SK-N-SH (cell line): ENCODE measurements at regions of chr5 and their contacts with region 1.

Region 1: DNA sequence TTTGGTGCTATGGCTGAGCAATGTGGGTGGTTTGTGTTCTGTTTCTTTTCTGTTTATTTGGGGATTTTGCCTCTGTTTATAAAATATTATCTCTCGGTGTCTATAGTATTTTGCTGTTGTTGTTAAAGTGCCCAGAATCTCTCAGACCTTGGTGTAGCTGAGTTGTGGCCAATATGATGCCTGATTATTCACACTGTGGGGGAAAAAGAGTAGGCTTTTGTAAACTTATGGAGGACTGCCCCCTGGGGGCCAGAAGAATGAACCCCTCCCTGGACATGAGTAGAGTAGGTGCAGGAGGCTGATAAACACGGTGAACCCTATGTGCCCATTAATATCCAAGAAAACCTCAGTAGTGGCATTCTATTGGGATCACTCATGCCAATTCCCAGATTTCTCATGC is 49.0 kb upstream of the DPYSL3 start:
- DNase-seq: peak; percentile 66
- H3K4me3 ChIP-seq: no peak overlapping the region
- H3K27ac ChIP-seq: no peak overlapping the region
- H3K4me1 ChIP-seq: peaks cover 5 to 13% of the 10 kb centered on the region in 2 experiments; a peak in 2 of 4 replicates
- H3K27me3 ChIP-seq: no peaks in the 10 kb centered on the region
- CTCF ChIP-seq: peak; percentile 88
- EP300 ChIP-seq: no peak
- RAD21 ChIP-seq: peak; percentile 94

Region 2: DNA sequence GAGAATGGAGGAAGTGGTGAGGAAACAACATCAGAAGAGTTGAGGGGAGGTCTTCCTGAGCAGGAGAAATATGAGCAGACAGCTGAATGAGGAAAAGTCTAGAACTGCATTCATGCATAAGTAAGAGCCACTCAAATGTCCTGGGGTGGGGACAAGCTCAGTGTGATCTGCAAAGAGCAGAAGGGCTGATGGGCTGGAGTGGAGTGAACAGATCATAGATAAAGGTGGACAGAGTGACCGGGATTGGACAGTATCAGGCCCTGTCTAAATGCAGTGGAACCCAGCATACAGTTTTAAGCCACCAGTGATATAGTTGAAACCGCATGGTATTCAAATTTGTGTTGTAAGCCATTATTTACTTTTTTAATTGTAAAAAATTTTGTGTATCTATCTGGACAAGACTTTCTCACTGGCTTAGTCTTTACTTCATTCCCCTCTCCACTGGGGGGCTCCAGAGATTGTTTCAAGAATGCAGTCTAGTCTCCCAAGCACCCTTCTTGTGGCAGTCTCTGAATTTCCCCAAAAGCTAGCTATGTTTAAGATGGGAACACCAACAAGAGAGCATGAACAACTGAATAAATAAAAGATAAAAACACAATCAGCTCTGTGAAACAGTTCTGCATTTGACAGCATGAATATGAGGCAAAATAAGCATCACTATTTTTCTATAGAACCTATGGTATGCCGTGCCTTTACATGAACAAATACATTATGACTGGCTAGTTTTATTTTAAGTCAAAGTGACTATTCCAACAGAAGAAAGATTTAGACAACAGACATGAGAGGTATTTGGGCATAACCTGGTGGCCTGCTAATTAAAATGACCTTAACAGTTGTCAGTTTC is 334.7 kb before region 1 on chr5:
- CTCF ChIA-PET with region 1: interaction called, 18 read pairs
- POLR2A ChIA-PET with region 1: interaction called, 4 read pairs
- DNase-seq: peak; percentile 69
- H3K4me3 ChIP-seq: no peak overlapping the region
- H3K27ac ChIP-seq: no peak overlapping the region
- H3K4me1 ChIP-seq: no peaks in the 10 kb centered on the region; a peak in 2 of 4 replicates
- H3K27me3 ChIP-seq: no peaks in the 10 kb centered on the region
- CTCF ChIP-seq: peak; percentile 84
- EP300 ChIP-seq: no peak
- RAD21 ChIP-seq: peak; percentile 84

Region 3: DNA sequence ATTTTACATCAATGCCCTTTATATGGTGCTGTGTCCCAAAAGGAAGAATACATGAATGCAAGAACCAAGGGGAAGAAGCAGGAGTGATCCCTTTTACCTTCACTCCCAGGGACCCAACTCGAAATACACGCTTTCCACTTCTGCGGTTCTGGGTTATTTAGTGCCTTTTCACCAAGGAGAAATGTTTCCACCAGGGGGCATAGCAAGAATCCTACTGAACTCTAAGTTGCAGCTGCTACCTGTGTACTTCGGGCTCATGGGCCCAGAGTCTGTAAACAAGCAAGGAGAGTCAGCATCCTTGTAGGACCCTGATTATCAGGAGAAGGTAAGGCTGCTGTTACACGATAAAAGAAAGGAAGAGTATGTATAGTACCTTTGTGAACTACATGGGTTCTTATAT is 94.6 kb before region 1 on chr5:
- CTCF ChIA-PET with region 1: interaction called, 18 read pairs
- POLR2A ChIA-PET with region 1: no interaction called
- DNase-seq: no peak
- H3K4me3 ChIP-seq: no peak overlapping the region
- H3K27ac ChIP-seq: no peak overlapping the region
- H3K4me1 ChIP-seq: peaks cover 0 to 12% of the 10 kb centered on the region in 2 experiments; a peak in 3 of 4 replicates
- H3K27me3 ChIP-seq: no peaks in the 10 kb centered on the region
- CTCF ChIP-seq: peak; percentile 60
- EP300 ChIP-seq: no peak
- RAD21 ChIP-seq: peak; percentile 69

Region 4: GRCh38 chr5:147509710-147510651 is 48.8 kb before region 1 on chr5 and contains the start of gene DPYSL3:
- CTCF ChIA-PET with region 1: interaction called, 16 read pairs
- POLR2A ChIA-PET with region 1: no interaction called
- DNase-seq: peak; percentile 84
- H3K4me3 ChIP-seq: peak within 1 kb of the TSS; percentile 82 to 92
- H3K27ac ChIP-seq: peak within 1 kb of the TSS; percentile 82 to 86
- H3K4me1 ChIP-seq: peaks cover 0 to 7% of the 10 kb centered on the region in 2 experiments; a peak in 2 of 4 replicates
- H3K27me3 ChIP-seq: no peaks in the 10 kb centered on the region
- CTCF ChIP-seq: peak; percentile 44
- EP300 ChIP-seq: peak in 1 of 2 experiments; percentile 13; a peak in 1 of 4 replicates
- RAD21 ChIP-seq: peak; percentile 39; the same call in 1 of the 2 replicates
- polyA plus RNA-seq, gene DPYSL3: 123 and 150 TPM in 2 replicates

Region 5: DNA sequence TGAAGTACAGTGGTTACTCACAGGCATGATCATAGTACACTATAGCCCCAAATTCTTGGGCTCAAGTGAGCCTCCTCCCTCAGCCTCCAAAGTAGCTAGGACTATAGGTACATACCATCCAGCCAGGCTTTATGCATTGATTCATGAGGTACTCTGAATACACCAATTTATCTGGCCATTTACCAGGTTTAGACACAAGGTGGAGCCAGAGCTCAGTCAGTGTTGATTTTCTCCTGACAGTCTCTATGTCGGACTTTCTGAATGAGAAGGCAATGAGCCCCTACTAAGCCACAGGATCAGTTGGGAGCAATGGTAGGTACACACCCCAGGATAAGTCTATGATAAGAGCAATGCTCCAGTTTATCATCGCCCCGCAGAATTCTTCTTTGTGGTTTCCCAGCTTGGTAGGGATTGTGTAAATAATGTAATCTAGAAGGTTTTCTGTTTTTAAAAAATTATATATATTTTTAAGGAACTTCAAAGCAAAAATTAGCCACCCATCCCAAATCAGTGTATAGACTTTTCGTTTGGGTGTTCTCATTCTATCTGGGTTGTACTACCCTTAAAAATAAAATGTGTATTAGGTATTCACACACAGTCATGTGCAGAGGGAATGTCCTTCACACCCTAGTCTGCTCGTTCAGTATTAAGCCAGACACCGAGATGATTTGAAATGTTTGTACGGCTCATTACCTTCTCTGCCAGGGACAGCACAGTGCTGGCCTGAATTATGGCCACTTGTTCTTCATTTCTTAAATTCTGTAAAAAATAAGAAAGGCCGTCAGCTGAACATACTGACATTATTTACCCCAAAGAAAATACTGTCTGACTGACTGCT is 69.5 kb after region 1 on chr5:
- CTCF ChIA-PET with region 1: no interaction called
- POLR2A ChIA-PET with region 1: no interaction called
- DNase-seq: peak; percentile 58
- H3K4me3 ChIP-seq: no peak overlapping the region; a peak in 1 of 4 replicates
- H3K27ac ChIP-seq: no peak overlapping the region
- H3K4me1 ChIP-seq: peaks cover 0 to 15% of the 10 kb centered on the region in 2 experiments; a peak in 1 of 4 replicates
- H3K27me3 ChIP-seq: no peaks in the 10 kb centered on the region
- CTCF ChIP-seq: peak; percentile 85
- EP300 ChIP-seq: no peak
- RAD21 ChIP-seq: peak; percentile 97

Region 6: DNA sequence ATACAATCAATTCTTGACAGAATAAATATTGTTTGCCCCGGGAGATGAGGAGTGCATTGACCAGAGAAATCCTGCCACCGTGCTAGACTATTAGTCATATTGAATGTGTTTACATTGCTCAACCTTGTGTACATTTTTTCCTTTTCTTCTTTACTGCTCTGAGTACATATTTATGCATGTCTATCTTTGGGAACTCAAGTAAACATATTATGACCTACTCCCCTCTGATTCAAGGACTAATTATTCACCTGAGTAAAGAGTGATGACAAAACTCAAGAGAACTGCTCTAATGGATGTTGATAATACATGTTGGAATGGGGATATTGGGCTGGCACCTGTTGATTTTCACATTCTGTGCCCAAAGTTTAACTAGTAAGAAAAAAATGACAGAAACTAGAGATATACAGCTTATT is 276.6 kb after region 1 on chr5:
- CTCF ChIA-PET with region 1: no interaction called
- POLR2A ChIA-PET with region 1: no interaction called
- DNase-seq: no peak
- H3K4me3 ChIP-seq: no peak overlapping the region
- H3K27ac ChIP-seq: no peak overlapping the region
- H3K4me1 ChIP-seq: no peaks in the 10 kb centered on the region; a peak in 1 of 4 replicates
- H3K27me3 ChIP-seq: no peaks in the 10 kb centered on the region
- CTCF ChIP-seq: no peak
- EP300 ChIP-seq: no peak
- RAD21 ChIP-seq: no peak